ENCODE measurements at regions of chr10 and their contacts with region 1.

Region 1: GRCh38 chr10:119103903-119104652 is at the start of gene DENND10:
- DNase-seq: peak; percentile 13 to 87
- H3K4me3 ChIP-seq: peak within 1 kb of the TSS; percentile 98 to 100
- H3K27ac ChIP-seq: peak within 1 kb of the TSS; percentile 43 to 76
- H3K4me1 ChIP-seq: no peaks in the 10 kb centered on the region
- H3K27me3 ChIP-seq: no peaks in the 10 kb centered on the region
- CTCF ChIP-seq: no peak
- total RNA-seq, gene DENND10: 85.1 TPM

Region 2: DNA sequence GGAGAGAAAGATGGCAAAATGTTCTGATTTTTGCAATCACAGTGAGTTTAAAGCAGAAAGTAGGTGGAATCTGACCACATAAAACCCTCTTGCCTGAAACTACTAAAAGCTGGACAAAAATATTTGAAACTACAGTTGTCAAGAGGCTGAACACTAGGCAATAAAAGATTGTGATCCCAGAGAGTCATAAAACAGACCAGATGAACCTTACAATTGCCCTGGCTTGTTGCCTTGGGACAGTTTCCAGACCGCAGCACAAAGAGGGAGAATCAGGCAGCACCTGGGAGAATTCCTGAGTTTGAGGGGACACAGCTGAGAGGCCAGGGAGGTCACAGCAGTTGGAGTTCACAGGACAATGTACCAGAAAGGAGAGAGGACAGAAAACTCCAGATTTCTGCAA is 181.9 kb before region 1 on chr10:
- intact Hi-C with region 1: no loop called
- DNase-seq: no peak
- H3K4me3 ChIP-seq: no peak overlapping the region
- H3K27ac ChIP-seq: no peak overlapping the region
- H3K4me1 ChIP-seq: no peaks in the 10 kb centered on the region
- H3K27me3 ChIP-seq: no peaks in the 10 kb centered on the region
- CTCF ChIP-seq: no peak

Region 3: GRCh38 chr10:119080521-119081260 is 23.4 kb before region 1 on chr10 and contains the start of gene EIF3A:
- intact Hi-C with region 1: loop called (anchors 1 kb)
- DNase-seq: peak; percentile 61 to 95
- H3K4me3 ChIP-seq: peak within 1 kb of the TSS; percentile 88 to 92
- H3K27ac ChIP-seq: peak within 1 kb of the TSS; percentile 96 to 98
- H3K4me1 ChIP-seq: peaks cover 0 to 23% of the 10 kb centered on the region in 2 donors
- H3K27me3 ChIP-seq: no peaks in the 10 kb centered on the region
- CTCF ChIP-seq: no peak
- total RNA-seq, gene EIF3A: 59.4 TPM

Region 4: DNA sequence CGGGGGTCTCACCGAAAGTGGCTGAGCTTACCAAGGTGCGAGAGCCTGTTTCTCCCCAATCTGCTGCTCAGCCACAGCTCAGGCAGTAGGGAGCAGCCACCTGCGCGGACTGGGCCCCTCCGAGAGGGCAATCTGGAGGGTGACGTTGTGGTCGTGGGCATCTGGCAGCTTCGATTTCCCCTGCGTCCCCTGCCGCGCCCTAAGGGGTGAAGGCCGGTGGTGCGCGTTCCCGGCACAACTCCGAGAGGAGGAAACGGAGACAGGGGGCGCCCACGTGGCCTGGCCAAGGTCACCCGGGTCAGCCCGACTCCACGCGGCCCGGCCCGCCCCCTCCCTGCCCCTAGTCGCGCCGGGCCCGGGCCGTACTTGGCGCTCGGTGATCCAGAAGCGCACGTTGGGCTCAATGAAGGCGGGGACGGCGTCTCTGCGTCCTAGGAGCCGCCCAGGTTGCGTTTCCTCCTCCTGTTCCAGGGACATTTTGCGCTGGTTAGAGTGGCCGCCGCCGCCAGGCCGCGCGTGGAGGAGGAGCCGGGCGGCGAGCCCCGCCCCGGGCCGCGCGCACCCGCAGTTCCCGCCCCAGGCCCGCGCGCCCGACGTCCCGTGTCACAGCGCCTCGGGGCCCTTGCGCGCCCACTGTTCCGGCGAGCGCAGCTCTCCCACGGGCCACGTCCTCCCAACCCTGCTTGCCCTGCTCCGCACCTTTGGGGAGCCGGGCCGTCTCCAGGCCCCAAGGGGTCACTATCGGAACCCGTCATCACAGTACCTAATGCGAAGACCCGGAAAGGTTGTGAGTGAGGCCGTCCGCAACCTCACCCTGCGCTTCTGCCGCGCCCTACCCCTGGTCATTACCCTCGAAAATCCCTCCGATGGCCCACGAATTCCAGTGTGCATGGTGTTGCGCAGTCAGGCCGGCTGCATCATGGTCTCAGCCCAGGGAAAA is 61.4 kb after region 1 on chr10 and contains the start of gene SFXN4:
- intact Hi-C with region 1: loop called (anchors 2 kb)
- DNase-seq: peak; percentile 14 to 88
- H3K4me3 ChIP-seq: peak within 1 kb of the TSS; percentile 72 to 89
- H3K27ac ChIP-seq: peak within 1 kb of the TSS; percentile 73 to 91
- H3K4me1 ChIP-seq: peaks cover 6% of the 10 kb centered on the region in 2 donors
- H3K27me3 ChIP-seq: no peaks in the 10 kb centered on the region
- CTCF ChIP-seq: no peak
- total RNA-seq, gene SFXN4: 13.7 TPM

Measured in ascending aorta (tissue), 2 donors.